Panc1 (cell line): ENCODE measurements at regions of chr1 and their contacts with region 1.

Region 1: DNA sequence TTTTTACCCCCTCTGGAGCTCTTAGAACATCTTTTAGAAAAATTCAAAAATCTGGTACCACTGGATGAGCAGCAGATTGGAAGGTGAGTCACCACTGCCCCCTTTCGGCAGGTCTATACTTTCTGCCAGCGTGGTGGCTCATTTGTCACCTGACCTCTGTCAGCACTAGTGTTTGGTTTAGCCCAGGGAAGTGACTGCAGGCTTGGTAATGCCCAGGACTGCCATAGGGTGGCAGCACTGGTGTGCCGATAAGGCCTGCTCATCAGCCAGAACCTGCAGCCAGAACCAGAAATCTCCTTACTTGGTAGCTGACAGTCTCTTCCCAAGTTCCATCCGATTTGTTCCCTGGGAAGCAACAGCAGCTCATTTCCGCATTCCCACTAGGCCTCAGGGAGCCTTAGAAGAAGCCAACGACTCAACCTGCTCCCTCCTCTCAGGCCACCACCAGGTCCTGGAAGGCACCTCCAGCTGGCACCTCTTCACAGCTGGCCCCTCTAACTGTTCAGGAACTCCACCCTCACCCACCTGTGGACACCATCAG is 6.8 kb downstream of the SMIM12 start:
- DNase-seq: peak; percentile 95
- ATAC-seq: peak; percentile 99
- H3K4me3 ChIP-seq: no peak overlapping the region
- H3K27ac ChIP-seq: peak overlapping the region; percentile 21; the same call in 1 of the 2 replicates
- H3K4me1 ChIP-seq: peaks cover 5% of the 10 kb centered on the region; the same call in 1 of the 2 replicates
- H3K27me3 ChIP-seq: no peaks in the 10 kb centered on the region
- CTCF ChIP-seq: peak; percentile 99

Region 2: DNA sequence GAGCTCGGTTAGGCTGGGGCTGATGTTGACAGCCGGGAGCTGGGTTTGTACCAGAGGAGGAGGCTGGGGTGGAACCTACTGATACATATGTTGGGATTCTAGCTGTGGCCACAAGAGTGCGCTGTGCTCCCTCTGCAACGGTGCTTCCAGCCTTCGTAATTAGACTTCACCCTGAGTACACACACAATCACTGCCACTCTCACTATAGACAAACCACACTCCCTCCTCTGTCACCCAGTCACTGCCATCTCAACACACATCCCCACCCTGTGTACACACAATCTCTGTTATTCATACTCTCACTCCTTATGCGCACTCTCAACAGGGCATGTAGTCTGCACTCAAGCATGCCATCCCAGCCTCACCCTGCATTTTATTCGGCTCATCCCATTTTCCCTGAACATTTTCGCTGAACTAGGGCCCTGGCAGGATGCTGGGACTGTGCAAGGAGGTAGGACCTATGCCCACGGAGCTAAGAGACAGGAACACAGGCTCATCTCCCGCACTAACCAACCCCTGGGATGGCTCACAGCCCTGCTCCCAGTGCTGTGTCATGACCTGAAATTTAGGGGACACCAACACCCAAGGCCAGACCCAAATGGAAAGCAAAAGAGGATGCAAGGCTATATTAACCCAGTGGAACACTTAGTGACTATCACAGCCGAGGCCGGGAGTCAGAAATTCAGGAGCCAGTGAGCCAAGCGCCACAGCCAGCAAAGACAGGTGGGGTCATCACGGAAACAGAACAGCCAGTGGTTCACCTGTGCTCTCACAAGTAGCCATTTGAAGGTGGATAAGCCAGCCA is 66.0 kb before region 1 on chr1:
- CTCF ChIA-PET with region 1: interaction called, 6 read pairs
- POLR2A ChIA-PET with region 1: no interaction called
- in situ Hi-C with region 1: no loop called
- intact Hi-C with region 1: loop called (anchors 1 kb)
- DNase-seq: peak; percentile 53
- ATAC-seq: peak; percentile 88
- H3K4me3 ChIP-seq: no peak overlapping the region
- H3K27ac ChIP-seq: no peak overlapping the region
- H3K4me1 ChIP-seq: no peaks in the 10 kb centered on the region
- H3K27me3 ChIP-seq: no peaks in the 10 kb centered on the region
- CTCF ChIP-seq: peak; percentile 95

Region 3: DNA sequence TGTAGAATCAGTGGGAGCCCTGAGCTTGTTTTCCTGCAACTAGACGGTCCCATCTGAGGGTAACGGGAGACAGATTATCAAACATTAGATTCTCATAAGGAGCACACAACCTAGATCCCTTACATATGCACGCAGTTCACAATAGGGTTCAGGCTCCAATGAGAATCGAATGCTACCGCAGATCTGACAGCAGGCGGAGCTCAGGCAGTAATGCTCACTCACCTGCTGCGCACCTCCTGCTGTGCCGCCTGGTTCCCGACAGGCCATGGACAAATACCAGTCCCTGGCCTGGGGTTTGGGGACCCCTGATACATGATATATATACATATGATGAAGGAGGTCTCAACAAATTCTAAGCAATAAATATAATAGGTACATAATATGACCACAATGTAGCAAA is 26.5 kb after region 1 on chr1:
- CTCF ChIA-PET with region 1: no interaction called
- POLR2A ChIA-PET with region 1: no interaction called
- in situ Hi-C with region 1: no loop called
- intact Hi-C with region 1: no loop called
- DNase-seq: no peak
- ATAC-seq: no peak
- H3K4me3 ChIP-seq: no peak overlapping the region
- H3K27ac ChIP-seq: no peak overlapping the region
- H3K4me1 ChIP-seq: no peaks in the 10 kb centered on the region
- H3K27me3 ChIP-seq: peaks cover 12% of the 10 kb centered on the region
- CTCF ChIP-seq: no peak